Activated CD4-positive, alpha-beta T cell treated with anti-CD3 and anti-CD28 coated beads for 36 hours (primary cell): ENCODE measurements at regions of chr6 and their contacts with region 1.

Region 1: DNA sequence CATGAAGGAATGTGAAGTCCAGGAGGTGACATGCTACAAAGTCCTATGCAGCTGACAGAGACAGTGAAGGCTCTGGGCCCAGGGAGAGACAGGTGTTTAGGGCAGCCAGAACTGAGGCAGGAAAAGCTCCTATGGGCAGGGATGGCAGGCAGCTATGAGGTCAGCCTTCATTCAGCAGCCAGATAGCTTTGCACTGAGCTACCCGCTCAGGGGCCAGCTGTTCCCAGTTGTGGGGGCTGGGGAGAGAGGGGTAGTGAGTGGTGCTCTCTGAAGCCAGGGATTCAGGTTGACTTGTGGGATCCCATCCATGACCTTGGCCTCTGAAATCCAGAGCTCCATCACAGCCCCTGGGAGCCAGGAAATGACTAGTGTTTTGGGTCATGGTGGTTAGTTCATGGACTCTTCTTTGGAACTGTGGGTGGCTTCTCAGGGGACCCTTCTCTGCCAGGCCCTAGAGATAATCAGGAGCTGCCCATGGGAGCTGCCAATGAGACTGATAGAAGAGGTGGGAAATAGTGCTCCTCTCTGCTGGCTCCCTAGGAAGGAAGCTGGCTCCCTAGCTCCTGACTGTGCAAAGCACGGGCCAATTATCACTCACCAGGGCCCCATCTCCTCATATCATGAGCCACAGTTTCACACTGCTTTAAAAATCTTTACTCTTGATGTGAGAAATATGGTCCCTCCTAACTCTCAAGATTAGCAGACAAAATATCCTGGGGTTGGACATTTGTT is 127.7 kb downstream of the VEGFA start:
- DNase-seq: no peak
- ATAC-seq: no peak
- H3K4me3 Mint-ChIP-seq: no peak overlapping the region
- H3K27ac Mint-ChIP-seq: no peak overlapping the region
- H3K4me1 Mint-ChIP-seq: no peaks in the 10 kb centered on the region
- H3K27me3 Mint-ChIP-seq: no peaks in the 10 kb centered on the region

Region 2: GRCh38 chr6:43853066-43853650 is 44.6 kb before region 1 on chr6:
- CTCF ChIA-PET with region 1: no interaction called
- POLR2A ChIA-PET with region 1: no interaction called
- intact Hi-C with region 1: loop called in 1 of 2 experiments (anchors 2 kb)
- DNase-seq: no peak
- ATAC-seq: no peak
- H3K4me3 Mint-ChIP-seq: no peak overlapping the region
- H3K27ac Mint-ChIP-seq: no peak overlapping the region
- H3K4me1 Mint-ChIP-seq: no peaks in the 10 kb centered on the region
- H3K27me3 Mint-ChIP-seq: no peaks in the 10 kb centered on the region

Region 3: DNA sequence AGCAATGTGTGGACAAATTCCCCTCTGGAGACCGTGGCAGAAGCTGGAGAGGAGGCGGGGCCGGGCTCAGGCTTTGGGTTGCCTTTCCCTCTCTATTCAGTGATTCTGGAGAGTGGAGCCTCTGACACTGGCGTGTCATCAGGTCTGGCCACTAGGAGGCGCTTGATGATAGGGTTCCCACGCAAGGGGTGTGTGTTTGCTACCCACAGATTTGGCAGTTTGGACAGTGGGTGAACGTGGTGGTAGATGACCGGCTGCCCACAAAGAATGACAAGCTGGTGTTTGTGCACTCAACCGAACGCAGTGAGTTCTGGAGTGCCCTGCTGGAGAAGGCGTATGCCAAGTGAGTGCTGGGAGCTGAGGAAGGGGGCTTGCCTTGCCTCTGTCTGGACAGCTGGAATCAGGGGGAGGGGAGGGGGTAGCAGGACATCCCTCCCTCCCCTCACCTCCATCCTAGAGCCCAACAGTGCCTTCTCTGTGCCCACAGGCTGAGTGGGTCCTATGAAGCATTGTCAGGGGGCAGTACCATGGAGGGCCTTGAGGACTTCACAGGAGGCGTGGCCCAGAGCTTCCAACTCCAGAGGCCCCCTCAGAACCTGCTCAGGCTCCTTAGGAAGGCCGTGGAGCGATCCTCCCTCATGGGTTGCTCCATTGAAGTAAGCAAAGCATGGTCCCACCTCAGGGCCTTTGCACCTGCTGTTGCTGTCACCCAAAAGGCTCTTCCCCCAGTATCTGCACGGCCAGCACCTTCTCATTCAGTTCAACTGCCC is 275.2 kb after region 1 on chr6:
- CTCF ChIA-PET with region 1: no interaction called
- POLR2A ChIA-PET with region 1: no interaction called
- intact Hi-C with region 1: no loop called
- DNase-seq: peak; percentile 91
- ATAC-seq: peak; percentile 72
- H3K4me3 Mint-ChIP-seq: peak overlapping the region; percentile 73
- H3K27ac Mint-ChIP-seq: peak overlapping the region; percentile 95
- H3K4me1 Mint-ChIP-seq: peaks cover 30% of the 10 kb centered on the region
- H3K27me3 Mint-ChIP-seq: no peaks in the 10 kb centered on the region

Region 4: GRCh38 chr6:44217332-44218143 is 319.8 kb after region 1 on chr6:
- CTCF ChIA-PET with region 1: no interaction called
- POLR2A ChIA-PET with region 1: no interaction called
- intact Hi-C with region 1: no loop called
- DNase-seq: no peak
- ATAC-seq: no peak
- H3K4me3 Mint-ChIP-seq: no peak overlapping the region
- H3K27ac Mint-ChIP-seq: no peak overlapping the region
- H3K4me1 Mint-ChIP-seq: peaks cover 27% of the 10 kb centered on the region
- H3K27me3 Mint-ChIP-seq: peaks cover 3% of the 10 kb centered on the region